ENCODE measurements at regions of chr14 and their contacts with region 1.

Region 1: GRCh38 chr14:67359775-67360648 is at the starts of genes ATP6V1D and EIF2S1:
- DNase-seq: peak; percentile 100
- H3K4me3 Mint-ChIP-seq: peak within 1 kb of the TSS; percentile 94
- H3K27ac Mint-ChIP-seq: peak within 1 kb of the TSS; percentile 99
- H3K4me1 Mint-ChIP-seq: peaks cover 44% of the 10 kb centered on the region
- H3K27me3 Mint-ChIP-seq: peaks cover 4% of the 10 kb centered on the region
- total RNA-seq, gene ATP6V1D: 29.7 and 30.1 TPM in 2 replicates
- total RNA-seq, gene EIF2S1: 255 and 268 TPM in 2 replicates

Region 2: DNA sequence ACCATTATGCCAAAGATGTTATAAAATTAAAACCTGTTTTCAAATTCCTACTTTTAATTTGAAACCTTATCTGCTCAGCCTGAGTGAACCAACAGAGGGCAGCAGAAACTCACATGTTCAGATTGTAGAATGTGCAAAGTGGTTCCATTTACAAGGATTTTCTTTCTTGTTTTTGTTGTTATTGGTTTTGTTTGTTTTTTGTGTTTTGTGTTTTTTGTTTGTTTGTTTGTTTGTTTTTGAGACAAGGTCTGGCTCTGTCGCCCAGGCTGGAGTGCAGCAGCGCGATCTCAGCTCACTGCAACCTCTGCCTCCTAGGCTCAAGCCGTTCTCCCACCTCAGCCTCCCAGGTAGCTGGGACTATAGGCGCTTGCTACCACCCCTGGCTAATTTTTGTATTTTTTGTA is 193.6 kb before region 1 on chr14:
- intact Hi-C with region 1: loop called (anchors 5 kb)
- DNase-seq: peak; percentile 78
- H3K4me3 Mint-ChIP-seq: no peak overlapping the region
- H3K27ac Mint-ChIP-seq: no peak overlapping the region
- H3K4me1 Mint-ChIP-seq: peaks cover 5% of the 10 kb centered on the region
- H3K27me3 Mint-ChIP-seq: no peaks in the 10 kb centered on the region

Region 3: DNA sequence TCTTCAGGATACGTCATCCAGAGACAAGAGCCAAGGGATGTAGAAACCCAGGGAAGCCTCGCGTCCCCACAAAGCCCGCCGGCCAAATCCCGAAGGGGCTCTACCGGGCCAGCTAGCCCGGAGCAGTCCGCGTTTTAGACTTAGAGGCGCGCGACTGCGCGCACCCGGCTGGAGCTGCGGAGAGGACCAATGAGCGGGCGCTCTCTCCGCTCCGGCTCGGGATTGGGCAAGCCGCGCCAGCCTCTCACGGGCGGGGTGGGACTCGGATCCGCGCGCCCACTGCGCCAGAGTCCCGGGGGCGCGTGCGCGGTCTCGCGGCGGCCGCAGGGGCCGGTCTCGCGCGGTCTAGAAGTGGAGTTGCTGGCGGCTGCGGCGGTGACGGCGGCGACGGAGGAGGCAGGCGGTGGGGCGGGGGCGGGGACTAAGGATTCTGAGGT is 119.0 kb before region 1 on chr14:
- intact Hi-C with region 1: loop called (anchors 1 kb)
- DNase-seq: peak; percentile 98
- H3K4me3 Mint-ChIP-seq: peak overlapping the region; percentile 88
- H3K27ac Mint-ChIP-seq: peak overlapping the region; percentile 84
- H3K4me1 Mint-ChIP-seq: peaks cover 11% of the 10 kb centered on the region
- H3K27me3 Mint-ChIP-seq: peaks cover 24% of the 10 kb centered on the region

Region 4: GRCh38 chr14:67373347-67373746 is 13.3 kb after region 1 on chr14:
- intact Hi-C with region 1: loop called (anchors 1 kb)
- DNase-seq: no peak
- H3K4me3 Mint-ChIP-seq: no peak overlapping the region
- H3K27ac Mint-ChIP-seq: peak overlapping the region; percentile 85
- H3K4me1 Mint-ChIP-seq: peaks cover 17% of the 10 kb centered on the region
- H3K27me3 Mint-ChIP-seq: no peaks in the 10 kb centered on the region

Measured in activated CD4-positive, alpha-beta T cell treated with anti-CD3 and anti-CD28 coated beads, Interleukin-2, amount 10 ng/mL, durations not matched to agents 24 days and 14 days (primary cell).